Heart left ventricle (tissue), 16 donors: ENCODE measurements at regions of chr6 and their contacts with region 1.

Region 1: DNA sequence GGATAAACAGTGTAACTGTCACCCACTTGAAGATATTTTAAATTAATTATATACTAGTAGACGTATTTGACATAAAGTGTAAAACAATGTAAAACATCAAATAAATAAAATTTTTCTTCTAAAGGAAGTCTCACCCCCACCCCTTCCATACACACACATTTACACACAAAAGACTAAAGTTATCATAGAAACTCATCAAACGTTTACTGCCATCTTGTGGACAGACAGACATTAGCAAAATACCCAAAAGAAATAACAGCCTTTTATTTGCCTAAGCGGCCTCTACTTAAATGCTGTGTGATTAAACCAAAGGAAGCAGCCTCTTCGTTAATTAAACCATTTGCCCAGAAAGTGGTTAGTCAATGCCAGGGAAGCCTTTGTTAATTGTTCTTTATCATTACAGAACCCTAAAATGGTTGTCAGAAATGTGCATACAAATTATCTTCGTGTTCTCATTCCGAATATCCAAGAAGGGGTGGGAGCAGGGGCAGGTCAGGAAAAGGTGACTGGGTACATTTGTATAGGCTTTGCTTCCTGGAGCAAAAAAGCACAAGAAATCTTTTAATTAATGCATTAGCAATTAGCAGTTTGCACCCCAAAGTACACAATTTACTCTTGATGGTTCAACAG is 176.2 kb upstream of the SASH1 start:
- DNase-seq: no peak
- ATAC-seq: peak in 2 of 4 donors; percentile 44 to 46
- H3K4me3 ChIP-seq: no peak overlapping the region
- H3K27ac ChIP-seq: no peak overlapping the region
- H3K4me1 ChIP-seq: no peaks in the 10 kb centered on the region
- H3K27me3 ChIP-seq: no peaks in the 10 kb centered on the region
- CTCF ChIP-seq: peak; percentile 53 to 78 (median 74)
- POLR2A ChIP-seq: no peak

Region 2: DNA sequence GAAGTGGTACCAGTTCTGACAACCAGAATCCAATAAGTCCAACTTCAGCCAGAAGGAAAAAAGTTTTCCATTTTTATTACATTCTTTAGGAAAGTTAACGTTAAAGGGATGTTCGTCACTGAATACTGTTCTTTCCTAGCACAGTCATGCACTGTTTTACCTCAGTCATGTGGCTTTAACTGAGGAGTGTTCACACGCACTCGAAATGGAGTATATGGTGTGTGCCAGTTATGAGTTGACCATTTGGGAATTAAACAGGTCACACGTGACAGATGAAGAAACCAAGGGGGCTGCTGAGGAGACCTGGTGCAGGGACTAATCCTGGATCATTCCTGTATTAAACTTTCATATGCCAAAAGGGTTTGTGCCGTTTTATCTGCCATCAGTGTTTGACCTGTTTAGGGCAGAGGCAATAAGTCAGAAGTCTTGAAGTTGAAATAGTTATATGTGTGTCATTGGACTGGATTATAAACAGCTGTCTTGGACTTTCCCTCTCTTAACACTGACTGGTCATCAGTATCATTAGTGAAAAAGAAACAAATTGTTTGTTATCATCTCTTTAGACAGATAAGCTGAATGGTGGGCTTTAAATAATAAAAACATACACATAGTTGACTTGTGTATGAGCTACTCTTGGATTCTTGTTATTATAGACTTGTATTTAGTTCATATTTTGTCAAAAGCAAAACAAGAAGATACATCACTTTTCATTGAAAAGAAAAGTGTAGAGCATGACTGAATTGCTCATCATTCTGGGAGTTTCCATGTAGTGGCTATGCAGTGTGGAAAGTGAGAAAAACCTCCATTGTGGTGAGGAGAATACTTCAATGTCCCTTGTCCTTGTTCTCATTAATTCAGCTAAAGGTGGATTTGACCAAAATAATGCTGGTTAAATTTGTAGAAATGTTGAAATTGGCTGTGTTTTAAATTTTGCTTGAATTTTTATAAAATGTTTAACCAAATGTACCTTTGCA is 781.4 kb before region 1 on chr6:
- intact Hi-C with region 1: loop called in 5 of 10 experiments (anchors 5 to 10 kb)
- DNase-seq: no peak
- ATAC-seq: no peak
- H3K4me3 ChIP-seq: no peak overlapping the region
- H3K27ac ChIP-seq: no peak overlapping the region
- H3K4me1 ChIP-seq: no peaks in the 10 kb centered on the region
- H3K27me3 ChIP-seq: no peaks in the 10 kb centered on the region
- CTCF ChIP-seq: no peak
- POLR2A ChIP-seq: no peak

Region 3: GRCh38 chr6:147390909-147391536 is 775.4 kb before region 1 on chr6:
- intact Hi-C with region 1: loop called in 5 of 10 experiments (anchors 5 to 10 kb)
- DNase-seq: no peak
- ATAC-seq: no peak
- H3K4me3 ChIP-seq: no peak overlapping the region
- H3K27ac ChIP-seq: no peak overlapping the region
- H3K4me1 ChIP-seq: no peaks in the 10 kb centered on the region
- H3K27me3 ChIP-seq: no peaks in the 10 kb centered on the region
- CTCF ChIP-seq: peak in 11 of 12 donors; percentile 24 to 57 (median 38)
- POLR2A ChIP-seq: no peak

Region 4: DNA sequence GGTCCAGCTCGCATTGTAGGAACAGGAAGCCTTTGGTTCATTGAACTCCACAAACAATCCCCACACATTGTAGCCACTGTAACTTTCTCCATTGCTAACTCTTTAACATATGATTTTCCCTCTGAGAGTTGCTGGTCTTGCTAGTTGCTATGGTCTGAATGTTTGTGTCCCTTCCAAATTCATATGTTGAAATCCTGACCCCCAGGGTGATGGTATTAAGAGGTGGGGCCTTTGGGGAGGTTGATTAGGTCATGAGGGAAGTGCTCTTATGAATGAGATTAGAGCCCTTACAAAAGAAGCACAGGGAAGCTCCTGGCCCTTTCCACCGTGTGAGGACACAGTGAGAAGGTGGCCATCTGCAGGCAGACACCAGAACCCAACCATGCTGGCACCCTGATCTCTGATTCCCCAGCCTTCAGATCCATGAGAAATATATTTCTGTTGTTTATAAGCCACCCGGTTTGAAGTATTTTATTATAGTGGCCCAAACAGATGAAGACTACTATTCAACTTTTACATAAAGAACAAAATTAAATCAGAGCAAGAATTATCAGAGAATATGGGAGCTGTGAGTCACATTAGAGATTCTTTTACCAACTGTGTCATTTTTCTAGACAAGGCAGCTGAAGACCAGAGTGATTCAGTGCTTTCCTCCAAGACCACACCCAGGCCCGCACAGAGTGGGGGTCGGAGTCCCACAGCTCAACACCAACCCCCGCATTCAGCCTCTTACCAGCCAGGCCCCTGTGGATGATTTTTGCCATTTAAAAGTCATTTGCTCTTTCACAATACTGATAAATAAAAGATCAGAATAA is 515.0 kb before region 1 on chr6:
- intact Hi-C with region 1: loop called in 3 of 10 experiments (anchors 5 to 10 kb)
- DNase-seq: peak in 4 of 5 donors; percentile 12 to 59 (median 42)
- ATAC-seq: peak; percentile 89 to 92 (median 91)
- H3K4me3 ChIP-seq: no peak overlapping the region
- H3K27ac ChIP-seq: peak overlapping the region in 1 of 12 donors; percentile 7
- H3K4me1 ChIP-seq: peaks cover 0 to 10% (median 5%) of the 10 kb centered on the region in 12 donors
- H3K27me3 ChIP-seq: no peaks in the 10 kb centered on the region
- CTCF ChIP-seq: peak; percentile 12 to 56 (median 42)
- POLR2A ChIP-seq: no peak